CD4-positive, alpha-beta T cell (primary cell): ENCODE measurements at regions of chr1 and their contacts with region 1.

Region 1: GRCh38 chr1:226186124-226187018 is at the start of gene ACBD3:
- DNase-seq: peak; percentile 73 to 94 (median 79)
- ATAC-seq: peak; percentile 98
- H3K4me3 ChIP-seq: peak within 1 kb of the TSS; percentile 93
- H3K4me3 Mint-ChIP-seq: peak within 1 kb of the TSS; percentile 98
- H3K27ac ChIP-seq: peak within 1 kb of the TSS; percentile 70 to 80
- H3K27ac Mint-ChIP-seq: peak within 1 kb of the TSS; percentile 89
- H3K4me1 ChIP-seq: peaks cover 38% of the 10 kb centered on the region
- H3K4me1 Mint-ChIP-seq: peaks cover 36% of the 10 kb centered on the region
- H3K27me3 ChIP-seq: no peaks in the 10 kb centered on the region
- H3K27me3 Mint-ChIP-seq: no peaks in the 10 kb centered on the region
- CTCF ChIP-seq: no peak
- total RNA-seq, gene ACBD3: 26.5 to 28.3 TPM

Region 2: GRCh38 chr1:225441314-225442122 is 744.9 kb before region 1 on chr1:
- CTCF ChIA-PET with region 1: no interaction called
- POLR2A ChIA-PET with region 1: no interaction called
- intact Hi-C with region 1: loop called in 1 of 2 experiments (anchors 10 kb)
- DNase-seq: peak in 2 of 14 experiments; percentile 21 to 26
- ATAC-seq: no peak
- H3K4me3 ChIP-seq: no peak overlapping the region
- H3K4me3 Mint-ChIP-seq: peak overlapping the region; percentile 66
- H3K27ac ChIP-seq: peak overlapping the region in 1 of 2 donors; percentile 4
- H3K27ac Mint-ChIP-seq: peak overlapping the region; percentile 61
- H3K4me1 ChIP-seq: peaks cover 54% of the 10 kb centered on the region
- H3K4me1 Mint-ChIP-seq: peaks cover 53% of the 10 kb centered on the region
- H3K27me3 ChIP-seq: no peaks in the 10 kb centered on the region
- H3K27me3 Mint-ChIP-seq: no peaks in the 10 kb centered on the region
- CTCF ChIP-seq: peak; percentile 27

Region 3: DNA sequence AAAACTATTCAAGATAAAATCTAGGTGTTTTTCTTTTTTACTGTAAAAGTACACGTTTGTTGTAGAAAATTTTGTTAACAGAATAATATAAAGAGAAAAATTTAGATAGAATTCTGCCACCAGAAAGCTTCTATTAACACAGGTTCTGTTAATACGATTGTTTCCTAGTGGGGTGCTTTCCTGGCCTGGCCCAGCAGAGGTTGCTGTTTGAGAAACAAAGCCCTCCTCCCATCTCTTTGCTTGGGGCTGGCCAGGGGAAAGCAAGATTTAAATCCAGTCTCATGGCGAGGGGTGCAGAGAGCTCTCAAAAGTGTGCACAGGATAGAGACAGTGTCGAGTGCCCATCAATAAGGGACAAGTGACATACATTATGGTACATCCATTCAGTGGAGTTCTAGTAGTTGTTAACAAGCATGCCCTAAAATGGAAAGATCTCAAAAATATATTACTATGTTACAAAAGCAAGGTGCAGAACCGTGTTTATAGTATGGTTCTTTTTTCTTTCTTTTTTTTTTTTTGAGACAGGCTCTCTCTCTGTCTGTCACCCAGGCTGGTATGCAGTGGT is 14.7 kb after region 1 on chr1:
- CTCF ChIA-PET with region 1: interaction called, 11 read pairs
- POLR2A ChIA-PET with region 1: interaction called, 3 read pairs
- intact Hi-C with region 1: no loop called
- DNase-seq: peak in 1 of 14 experiments; percentile 15
- ATAC-seq: no peak
- H3K4me3 ChIP-seq: no peak overlapping the region
- H3K4me3 Mint-ChIP-seq: no peak overlapping the region
- H3K27ac ChIP-seq: no peak overlapping the region
- H3K27ac Mint-ChIP-seq: no peak overlapping the region
- H3K4me1 ChIP-seq: no peaks in the 10 kb centered on the region
- H3K4me1 Mint-ChIP-seq: no peaks in the 10 kb centered on the region
- H3K27me3 ChIP-seq: no peaks in the 10 kb centered on the region
- H3K27me3 Mint-ChIP-seq: peaks cover 29% of the 10 kb centered on the region
- CTCF ChIP-seq: no peak

Region 4: GRCh38 chr1:226308723-226309315 is 122.4 kb after region 1 on chr1 and contains the start of gene LIN9:
- CTCF ChIA-PET with region 1: no interaction called
- POLR2A ChIA-PET with region 1: no interaction called
- intact Hi-C with region 1: loop called in 1 of 2 experiments (anchors 5 kb)
- DNase-seq: peak; percentile 83 to 94 (median 89)
- ATAC-seq: peak; percentile 91
- H3K4me3 ChIP-seq: peak within 1 kb of the TSS; percentile 98
- H3K4me3 Mint-ChIP-seq: peak within 1 kb of the TSS; percentile 95
- H3K27ac ChIP-seq: peak within 1 kb of the TSS in 1 of 2 donors; percentile 30
- H3K27ac Mint-ChIP-seq: peak within 1 kb of the TSS; percentile 67
- H3K4me1 ChIP-seq: peaks cover 12% of the 10 kb centered on the region
- H3K4me1 Mint-ChIP-seq: peaks cover 26% of the 10 kb centered on the region
- H3K27me3 ChIP-seq: peaks cover 0 to 8% of the 10 kb centered on the region in 2 experiments
- H3K27me3 Mint-ChIP-seq: peaks cover 25% of the 10 kb centered on the region
- CTCF ChIP-seq: no peak
- total RNA-seq, gene LIN9: 1.3 to 1.5 TPM